HCT116 (cell line): ENCODE measurements at regions of chr10 and their contacts with region 1.

Region 1: GRCh38 chr10:117442944-117443685 is 67.9 kb upstream of the PDZD8 start:
- DNase-seq: peak; percentile 83
- ATAC-seq: peak; percentile 95
- H3K4me3 ChIP-seq: peak overlapping the region in 1 of 2 experiments; percentile 26; a peak in 2 of 4 replicates
- H3K27ac ChIP-seq: no peak overlapping the region
- H3K4me1 ChIP-seq: peaks cover 2 to 19% of the 10 kb centered on the region in 2 experiments; a peak in 2 of 4 replicates
- H3K27me3 ChIP-seq: no peaks in the 10 kb centered on the region; the same call in 1 of the 2 replicates
- CTCF ChIP-seq: peak; percentile 90 to 99 (median 99)
- POLR2A ChIP-seq: no peak
- RAD21 ChIP-seq: peak; percentile 89

Region 2: GRCh38 chr10:117405730-117406129 is 37.4 kb before region 1 on chr10:
- CTCF ChIA-PET with region 1: interaction called, 10 read pairs
- POLR2A ChIA-PET with region 1: no interaction called
- RAD21 ChIA-PET with region 1: no interaction called
- intact Hi-C with region 1: no loop called
- DNase-seq: no peak
- ATAC-seq: no peak
- H3K4me3 ChIP-seq: no peak overlapping the region
- H3K27ac ChIP-seq: no peak overlapping the region
- H3K4me1 ChIP-seq: no peaks in the 10 kb centered on the region
- H3K27me3 ChIP-seq: peaks cover 7% of the 10 kb centered on the region; the same call in 1 of the 2 replicates
- CTCF ChIP-seq: no peak
- POLR2A ChIP-seq: no peak
- RAD21 ChIP-seq: no peak

Region 3: GRCh38 chr10:117461766-117462423 is 18.8 kb after region 1 on chr10:
- CTCF ChIA-PET with region 1: interaction called, 37 read pairs
- POLR2A ChIA-PET with region 1: interaction called, 5 read pairs
- RAD21 ChIA-PET with region 1: no interaction called
- intact Hi-C with region 1: no loop called
- DNase-seq: peak; percentile 77
- ATAC-seq: peak; percentile 86
- H3K4me3 ChIP-seq: no peak overlapping the region
- H3K27ac ChIP-seq: no peak overlapping the region
- H3K4me1 ChIP-seq: peaks cover 7 to 23% of the 10 kb centered on the region in 2 experiments
- H3K27me3 ChIP-seq: no peaks in the 10 kb centered on the region
- CTCF ChIP-seq: no peak
- POLR2A ChIP-seq: no peak
- RAD21 ChIP-seq: no peak

Region 4: DNA sequence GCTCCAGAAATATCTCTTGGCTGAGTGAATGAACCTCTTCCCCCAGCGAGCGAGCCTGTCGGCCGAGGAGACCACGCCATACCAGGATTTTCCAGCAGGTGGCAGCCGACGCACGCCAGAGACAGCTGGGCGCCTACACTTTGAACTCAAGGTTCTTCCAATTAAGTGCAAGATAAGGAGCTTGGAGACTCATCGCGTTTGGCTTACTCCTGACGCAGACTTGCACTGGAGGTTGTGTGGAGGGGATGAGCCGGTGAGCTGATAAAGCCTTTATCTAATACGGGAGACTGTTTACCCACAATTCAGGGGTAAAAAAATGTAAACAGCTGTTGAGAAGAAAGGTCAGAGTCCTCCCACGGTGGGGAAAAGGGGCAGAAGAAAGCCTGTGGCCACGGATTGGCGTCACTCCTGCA is 53.5 kb after region 1 on chr10:
- CTCF ChIA-PET with region 1: interaction called, 22 read pairs
- POLR2A ChIA-PET with region 1: no interaction called
- RAD21 ChIA-PET with region 1: interaction called, 3 read pairs
- intact Hi-C with region 1: no loop called
- DNase-seq: peak; percentile 84
- ATAC-seq: peak; percentile 97
- H3K4me3 ChIP-seq: no peak overlapping the region; a peak in 1 of 4 replicates
- H3K27ac ChIP-seq: no peak overlapping the region
- H3K4me1 ChIP-seq: peaks cover 0 to 7% of the 10 kb centered on the region in 2 experiments; a peak in 1 of 4 replicates
- H3K27me3 ChIP-seq: peaks cover 31% of the 10 kb centered on the region
- CTCF ChIP-seq: peak; percentile 96 to 100 (median 97)
- POLR2A ChIP-seq: no peak
- RAD21 ChIP-seq: peak; percentile 99

Region 5: DNA sequence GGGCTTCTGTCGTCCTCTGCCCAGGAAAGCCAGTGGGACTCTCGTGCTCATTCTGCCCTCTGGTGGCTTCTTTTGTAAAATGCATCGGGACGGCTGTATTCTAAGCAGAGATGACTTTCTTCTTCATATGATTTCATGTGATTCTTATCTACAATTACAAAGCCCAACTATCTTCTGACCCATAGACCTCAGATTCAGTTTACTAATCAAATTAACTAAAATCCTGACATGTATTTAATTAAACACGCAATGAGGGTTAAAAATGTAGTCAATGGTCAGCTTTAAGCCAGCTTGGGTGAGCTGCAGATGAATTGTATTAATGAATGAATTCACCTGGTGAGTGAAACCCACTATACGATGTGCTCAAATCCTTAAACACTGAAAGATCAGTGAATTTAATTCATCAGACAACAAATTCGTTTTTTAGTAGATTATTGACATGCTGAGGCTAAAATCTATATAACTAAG is 1016.6 kb after region 1 on chr10:
- CTCF ChIA-PET with region 1: interaction called, 14 read pairs
- POLR2A ChIA-PET with region 1: no interaction called
- RAD21 ChIA-PET with region 1: no interaction called
- intact Hi-C with region 1: no loop called
- DNase-seq: peak; percentile 73
- ATAC-seq: peak; percentile 99
- H3K4me3 ChIP-seq: no peak overlapping the region
- H3K27ac ChIP-seq: no peak overlapping the region
- H3K4me1 ChIP-seq: peaks cover 0 to 6% of the 10 kb centered on the region in 2 experiments; a peak in 1 of 4 replicates
- H3K27me3 ChIP-seq: peaks cover 33% of the 10 kb centered on the region
- CTCF ChIP-seq: peak; percentile 86 to 93 (median 90)
- POLR2A ChIP-seq: no peak
- RAD21 ChIP-seq: peak; percentile 93